ENCODE measurements at regions of chr3 and their contacts with region 1.

Region 1: GRCh38 chr3:195894780-195895607 is 13.4 kb downstream of the TNK2 start:
- DNase-seq: peak; percentile 76
- H3K4me3 Mint-ChIP-seq: peak overlapping the region; percentile 87
- H3K27ac Mint-ChIP-seq: peak overlapping the region; percentile 92
- H3K4me1 Mint-ChIP-seq: peaks cover 47% of the 10 kb centered on the region
- H3K27me3 Mint-ChIP-seq: no peaks in the 10 kb centered on the region

Region 2: DNA sequence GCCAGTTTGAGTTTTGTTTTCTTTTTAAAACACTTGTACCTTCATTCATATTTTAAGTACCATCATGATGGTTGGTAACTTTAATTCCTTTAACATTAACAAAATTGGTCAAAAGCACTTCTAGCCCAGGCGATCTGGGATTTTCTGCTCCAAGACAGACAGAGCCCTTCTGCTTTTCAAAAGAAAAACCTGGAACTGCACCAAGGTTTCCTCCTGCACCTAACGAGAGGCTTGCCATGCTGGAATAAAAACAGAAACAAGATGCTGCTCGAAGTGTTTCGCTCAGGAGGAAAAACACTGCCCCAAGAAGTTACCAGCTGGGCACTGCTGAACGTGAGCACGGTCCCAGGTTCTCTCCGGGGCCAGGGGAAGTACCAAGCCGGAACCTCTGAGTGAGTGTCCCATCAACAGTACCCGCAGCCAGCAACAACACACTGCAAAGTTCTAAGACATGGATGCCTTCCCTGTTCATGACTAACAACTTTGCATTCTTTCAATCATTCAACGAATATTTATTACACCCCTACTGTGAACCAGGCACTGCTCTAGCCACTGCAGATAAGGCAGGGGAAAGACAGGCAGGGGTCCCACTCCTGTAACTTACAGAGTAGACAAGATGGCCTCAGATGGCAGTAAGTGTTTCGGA is 722.8 kb before region 1 on chr3:
- CTCF ChIA-PET with region 1: no interaction called
- DNase-seq: no peak
- H3K4me3 Mint-ChIP-seq: no peak overlapping the region
- H3K27ac Mint-ChIP-seq: no peak overlapping the region
- H3K4me1 Mint-ChIP-seq: no peaks in the 10 kb centered on the region
- H3K27me3 Mint-ChIP-seq: no peaks in the 10 kb centered on the region

Region 3: GRCh38 chr3:195752546-195753331 is 142.3 kb before region 1 on chr3:
- CTCF ChIA-PET with region 1: no interaction called
- DNase-seq: no peak
- H3K4me3 Mint-ChIP-seq: no peak overlapping the region
- H3K27ac Mint-ChIP-seq: no peak overlapping the region
- H3K4me1 Mint-ChIP-seq: peaks cover 15% of the 10 kb centered on the region
- H3K27me3 Mint-ChIP-seq: peaks cover 33% of the 10 kb centered on the region

Region 4: GRCh38 chr3:195863121-195864006 is 31.6 kb before region 1 on chr3:
- CTCF ChIA-PET with region 1: interaction called, 29 read pairs
- DNase-seq: peak; percentile 73
- H3K4me3 Mint-ChIP-seq: no peak overlapping the region
- H3K27ac Mint-ChIP-seq: peak overlapping the region; percentile 60
- H3K4me1 Mint-ChIP-seq: peaks cover 5% of the 10 kb centered on the region
- H3K27me3 Mint-ChIP-seq: peaks cover 15% of the 10 kb centered on the region

Region 5: GRCh38 chr3:195909644-195910508 is 14.9 kb after region 1 on chr3:
- CTCF ChIA-PET with region 1: interaction called, 118 read pairs
- DNase-seq: peak; percentile 92
- H3K4me3 Mint-ChIP-seq: peak overlapping the region; percentile 73
- H3K27ac Mint-ChIP-seq: peak overlapping the region; percentile 86
- H3K4me1 Mint-ChIP-seq: peaks cover 43% of the 10 kb centered on the region
- H3K27me3 Mint-ChIP-seq: peaks cover 9% of the 10 kb centered on the region